CD4-positive, alpha-beta T cell (primary cell): ENCODE measurements at regions of chr6 and their contacts with region 1.

Region 1: DNA sequence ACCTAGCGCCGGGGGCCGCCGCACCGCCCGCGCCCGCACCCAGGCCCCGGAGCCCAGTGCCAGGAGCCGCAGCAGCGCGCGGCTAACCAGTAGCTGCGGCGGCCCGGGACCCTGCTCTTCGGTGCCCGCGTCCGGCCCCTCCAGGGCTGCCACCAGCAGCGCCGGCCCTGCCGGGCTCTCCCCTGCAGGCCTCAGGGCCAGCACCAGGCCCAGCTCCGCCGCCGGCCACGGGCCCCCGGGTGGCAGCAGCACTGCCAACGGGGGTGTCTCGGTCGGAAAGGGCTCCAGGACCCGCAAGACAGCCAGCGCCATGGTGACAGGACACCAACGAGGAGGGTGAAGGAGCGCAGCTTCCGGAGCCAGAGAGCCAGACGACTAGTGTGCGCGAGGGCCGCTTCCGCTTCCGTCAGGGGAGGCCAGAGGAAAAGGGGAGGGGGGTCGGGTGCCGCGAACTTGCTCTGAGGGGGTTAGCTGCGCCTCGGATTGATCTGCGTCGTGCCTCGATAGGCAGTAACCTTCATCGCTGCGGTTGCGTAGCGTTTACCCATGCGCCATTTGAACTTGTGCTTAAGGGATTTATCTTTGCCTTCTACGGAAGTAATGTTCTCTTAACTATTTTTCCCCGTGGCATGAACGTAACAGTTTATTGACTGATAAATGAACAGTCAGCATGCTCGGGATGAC is at the start of gene PEX6:
- DNase-seq: peak; percentile 81 to 98 (median 93)
- ATAC-seq: peak; percentile 94
- H3K4me3 ChIP-seq: peak within 1 kb of the TSS; percentile 85
- H3K4me3 Mint-ChIP-seq: peak within 1 kb of the TSS; percentile 95
- H3K27ac ChIP-seq: peak within 1 kb of the TSS; percentile 83 to 85
- H3K27ac Mint-ChIP-seq: peak within 1 kb of the TSS; percentile 97
- H3K4me1 ChIP-seq: peaks cover 50% of the 10 kb centered on the region
- H3K4me1 Mint-ChIP-seq: peaks cover 47% of the 10 kb centered on the region
- H3K27me3 ChIP-seq: no peaks in the 10 kb centered on the region
- H3K27me3 Mint-ChIP-seq: no peaks in the 10 kb centered on the region
- CTCF ChIP-seq: no peak
- total RNA-seq, gene PEX6: 12.8 to 13.6 TPM

Region 2: DNA sequence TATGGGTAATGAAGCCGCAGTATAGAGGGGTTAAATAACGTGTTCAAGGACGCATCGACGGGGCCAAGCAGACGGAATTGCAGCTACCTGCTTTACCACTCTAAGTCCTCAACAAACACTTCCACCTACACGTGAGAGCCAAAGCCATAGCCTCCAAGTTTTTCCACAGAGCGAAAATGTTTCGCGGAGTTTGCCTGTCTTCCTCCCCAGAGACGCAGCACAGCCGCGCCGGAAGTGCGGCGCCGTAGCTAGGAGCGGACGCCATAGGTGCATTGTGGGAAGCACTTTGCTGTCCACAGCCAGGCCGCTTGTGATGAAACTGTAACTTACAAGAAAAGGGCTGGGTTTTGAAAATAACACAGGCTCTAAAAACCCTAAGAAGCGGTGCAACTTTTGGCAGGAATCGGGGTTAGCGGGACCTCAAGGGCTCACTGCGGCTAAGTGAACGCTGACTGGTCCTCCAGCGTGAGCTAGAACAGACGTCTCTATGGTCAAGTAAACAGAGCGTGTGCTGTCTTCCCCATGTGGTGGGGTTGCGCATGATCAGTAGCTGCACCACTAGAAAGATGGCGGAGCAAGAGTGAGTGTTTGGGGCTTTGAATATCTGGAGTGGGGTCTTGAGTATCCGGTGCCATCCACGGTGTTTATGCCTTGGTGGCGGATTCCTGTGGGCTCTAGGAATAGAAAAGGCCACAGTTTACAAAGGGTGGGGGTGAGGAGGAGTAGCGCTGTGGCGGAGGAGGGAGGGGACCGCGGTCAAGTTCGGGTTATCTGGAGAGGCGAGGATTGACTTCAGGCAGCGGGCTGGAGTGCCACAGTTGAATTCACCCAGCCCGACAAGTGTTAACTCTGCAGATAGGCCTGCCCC is 99.4 kb before region 1 on chr6 and contains the start of gene RPL7L1:
- CTCF ChIA-PET with region 1: no interaction called
- POLR2A ChIA-PET with region 1: interaction called, 16 read pairs
- intact Hi-C with region 1: no loop called
- DNase-seq: peak; percentile 68 to 93 (median 79)
- ATAC-seq: peak; percentile 92
- H3K4me3 ChIP-seq: peak within 1 kb of the TSS; percentile 69
- H3K4me3 Mint-ChIP-seq: peak within 1 kb of the TSS; percentile 93
- H3K27ac ChIP-seq: peak within 1 kb of the TSS; percentile 94 to 95
- H3K27ac Mint-ChIP-seq: peak within 1 kb of the TSS; percentile 97
- H3K4me1 ChIP-seq: peaks cover 41% of the 10 kb centered on the region
- H3K4me1 Mint-ChIP-seq: peaks cover 23% of the 10 kb centered on the region
- H3K27me3 ChIP-seq: no peaks in the 10 kb centered on the region
- H3K27me3 Mint-ChIP-seq: no peaks in the 10 kb centered on the region
- CTCF ChIP-seq: no peak
- total RNA-seq, gene RPL7L1: 76.1 TPM

Region 3: DNA sequence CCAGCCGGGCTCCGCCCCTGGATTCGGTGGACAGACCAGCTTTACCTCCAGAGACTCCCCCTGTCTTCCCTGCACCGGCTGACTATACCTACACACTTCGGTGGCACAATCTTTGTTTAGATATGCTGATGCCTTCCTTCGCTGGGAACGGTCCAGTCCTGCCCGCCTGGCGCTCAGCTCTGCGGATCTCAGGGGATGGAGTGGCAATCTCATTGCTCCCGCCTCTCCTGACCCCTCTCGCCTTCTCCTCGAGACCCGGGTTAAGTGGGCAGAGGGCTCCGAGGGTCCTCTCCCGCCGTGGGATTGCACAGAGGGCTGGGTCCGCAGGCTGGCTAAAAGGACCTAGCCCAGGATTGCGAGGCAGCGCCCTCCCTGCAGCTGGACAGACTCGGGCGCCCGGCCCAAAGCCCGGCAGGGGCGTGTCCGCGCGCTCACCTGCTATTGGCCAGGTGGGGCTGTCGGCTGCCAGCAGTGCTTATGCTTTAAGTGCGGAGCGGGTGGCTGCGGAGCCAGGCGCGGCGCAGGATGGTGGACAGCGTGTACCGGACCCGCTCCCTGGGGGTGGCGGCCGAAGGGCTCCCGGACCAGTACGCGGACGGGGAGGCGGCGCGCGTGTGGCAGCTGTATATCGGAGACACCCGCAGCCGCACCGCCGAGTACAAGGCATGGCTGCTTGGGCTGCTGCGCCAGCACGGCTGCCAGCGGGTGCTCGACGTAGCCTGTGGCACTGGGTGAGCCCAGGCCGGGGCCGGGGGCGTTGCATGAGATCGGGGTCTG is 18.6 kb before region 1 on chr6 and contains the start of gene GNMT:
- CTCF ChIA-PET with region 1: no interaction called
- POLR2A ChIA-PET with region 1: interaction called, 18 read pairs
- intact Hi-C with region 1: no loop called
- DNase-seq: peak in 12 of 14 experiments; percentile 4 to 62 (median 32)
- ATAC-seq: peak; percentile 74
- H3K4me3 ChIP-seq: peak within 1 kb of the TSS; percentile 55
- H3K4me3 Mint-ChIP-seq: peak within 1 kb of the TSS; percentile 79
- H3K27ac ChIP-seq: no peak within 1 kb of the TSS
- H3K27ac Mint-ChIP-seq: no peak within 1 kb of the TSS
- H3K4me1 ChIP-seq: peaks cover 15% of the 10 kb centered on the region
- H3K4me1 Mint-ChIP-seq: peaks cover 20% of the 10 kb centered on the region
- H3K27me3 ChIP-seq: no peaks in the 10 kb centered on the region
- H3K27me3 Mint-ChIP-seq: no peaks in the 10 kb centered on the region
- CTCF ChIP-seq: no peak
- total RNA-seq, gene GNMT: 1.2 to 2.1 TPM

Region 4: DNA sequence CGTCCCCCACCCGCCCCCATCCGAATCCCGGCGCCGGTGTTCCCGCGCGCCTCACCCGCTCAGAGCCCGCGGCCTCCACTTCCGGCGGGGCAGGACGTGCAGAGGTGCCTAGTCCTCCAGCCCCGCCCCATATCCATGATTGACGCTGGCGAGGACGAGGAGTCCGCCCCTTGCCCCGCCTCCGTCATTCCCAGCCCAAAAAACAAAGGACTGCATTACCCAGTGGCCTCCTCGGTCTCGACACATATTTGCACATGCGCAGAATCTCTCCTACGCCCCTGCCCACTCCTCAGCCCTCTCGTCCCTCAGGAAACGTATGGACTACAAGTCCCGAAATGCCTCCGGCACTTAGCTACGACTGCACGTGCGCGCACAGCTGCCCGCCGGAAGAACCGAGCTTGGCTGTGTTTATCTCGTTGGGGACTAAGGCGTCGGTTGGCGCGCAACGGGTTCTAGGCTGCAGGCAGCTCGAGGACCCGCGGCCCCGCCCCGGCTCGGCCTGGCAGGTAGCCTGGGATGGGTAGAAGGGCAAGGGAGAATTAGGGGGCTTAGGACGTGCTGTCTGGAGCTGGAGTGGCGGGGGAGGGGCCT is 35.0 kb after region 1 on chr6 and contains the starts of genes KLHDC3 and MEA1:
- CTCF ChIA-PET with region 1: interaction called, 4 read pairs
- POLR2A ChIA-PET with region 1: interaction called, 65 read pairs
- intact Hi-C with region 1: loop called (anchors 1 kb)
- DNase-seq: peak; percentile 95 to 100 (median 98)
- ATAC-seq: peak; percentile 91
- H3K4me3 ChIP-seq: peak within 1 kb of the TSS; percentile 86
- H3K4me3 Mint-ChIP-seq: peak within 1 kb of the TSS; percentile 88
- H3K27ac ChIP-seq: peak within 1 kb of the TSS; percentile 51 to 59
- H3K27ac Mint-ChIP-seq: peak within 1 kb of the TSS; percentile 81
- H3K4me1 ChIP-seq: peaks cover 55% of the 10 kb centered on the region
- H3K4me1 Mint-ChIP-seq: peaks cover 59% of the 10 kb centered on the region
- H3K27me3 ChIP-seq: no peaks in the 10 kb centered on the region
- H3K27me3 Mint-ChIP-seq: no peaks in the 10 kb centered on the region
- CTCF ChIP-seq: no peak
- total RNA-seq, gene KLHDC3: 21.0 to 22.3 TPM
- total RNA-seq, gene MEA1: 13.6 to 17.0 TPM

Region 5: GRCh38 chr6:43021270-43022047 is 42.5 kb after region 1 on chr6 and contains the start of gene RRP36:
- CTCF ChIA-PET with region 1: no interaction called
- POLR2A ChIA-PET with region 1: interaction called, 23 read pairs
- intact Hi-C with region 1: no loop called
- DNase-seq: peak; percentile 33 to 80 (median 63)
- ATAC-seq: peak; percentile 73
- H3K4me3 ChIP-seq: peak within 1 kb of the TSS; percentile 84
- H3K4me3 Mint-ChIP-seq: peak within 1 kb of the TSS; percentile 98
- H3K27ac ChIP-seq: peak within 1 kb of the TSS; percentile 57 to 62
- H3K27ac Mint-ChIP-seq: peak within 1 kb of the TSS; percentile 83
- H3K4me1 ChIP-seq: peaks cover 52% of the 10 kb centered on the region
- H3K4me1 Mint-ChIP-seq: peaks cover 38% of the 10 kb centered on the region
- H3K27me3 ChIP-seq: no peaks in the 10 kb centered on the region
- H3K27me3 Mint-ChIP-seq: no peaks in the 10 kb centered on the region
- CTCF ChIP-seq: no peak
- total RNA-seq, gene RRP36: 17.2 to 17.7 TPM

Region 6: GRCh38 chr6:43053545-43054205 is 74.7 kb after region 1 on chr6 and contains the start of gene CUL7:
- CTCF ChIA-PET with region 1: no interaction called
- POLR2A ChIA-PET with region 1: interaction called, 16 read pairs
- intact Hi-C with region 1: loop called (anchors 5 kb)
- DNase-seq: peak; percentile 78 to 95 (median 89)
- ATAC-seq: peak; percentile 99
- H3K4me3 ChIP-seq: peak within 1 kb of the TSS; percentile 93
- H3K4me3 Mint-ChIP-seq: peak within 1 kb of the TSS; percentile 98
- H3K27ac ChIP-seq: peak within 1 kb of the TSS; percentile 76 to 84
- H3K27ac Mint-ChIP-seq: peak within 1 kb of the TSS; percentile 96
- H3K4me1 ChIP-seq: peaks cover 45% of the 10 kb centered on the region
- H3K4me1 Mint-ChIP-seq: peaks cover 59% of the 10 kb centered on the region
- H3K27me3 ChIP-seq: no peaks in the 10 kb centered on the region
- H3K27me3 Mint-ChIP-seq: no peaks in the 10 kb centered on the region
- CTCF ChIP-seq: no peak
- total RNA-seq, gene CUL7: 5.9 to 6.9 TPM